ENCODE measurements at regions of chr16 and their contacts with region 1.

Region 1: DNA sequence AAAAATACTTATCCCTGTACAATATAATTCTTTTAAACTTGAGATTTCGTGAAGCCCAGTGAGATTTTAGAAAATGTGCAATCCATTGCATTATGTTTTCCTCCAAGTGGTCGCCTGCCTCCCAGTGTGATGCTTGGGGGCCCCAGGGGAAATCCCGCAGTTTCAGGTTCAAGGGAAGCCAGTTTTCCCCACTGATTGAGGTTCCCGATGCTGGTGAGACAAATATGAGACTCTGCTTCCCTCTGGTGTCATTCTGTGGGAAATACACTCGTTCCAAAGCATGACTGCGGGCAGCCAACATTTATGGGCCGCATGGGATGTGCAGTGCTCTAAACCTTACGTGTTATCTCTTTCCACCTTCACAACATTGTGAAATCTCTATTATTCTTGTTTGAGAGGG is 200.8 kb downstream of the PRKCB start:
- DNase-seq: peak; percentile 33
- H3K4me3 ChIP-seq: no peak overlapping the region
- H3K27ac ChIP-seq: no peak overlapping the region
- H3K4me1 ChIP-seq: no peaks in the 10 kb centered on the region
- H3K27me3 ChIP-seq: no peaks in the 10 kb centered on the region
- CTCF ChIP-seq: peak; percentile 77 to 82

Region 2: DNA sequence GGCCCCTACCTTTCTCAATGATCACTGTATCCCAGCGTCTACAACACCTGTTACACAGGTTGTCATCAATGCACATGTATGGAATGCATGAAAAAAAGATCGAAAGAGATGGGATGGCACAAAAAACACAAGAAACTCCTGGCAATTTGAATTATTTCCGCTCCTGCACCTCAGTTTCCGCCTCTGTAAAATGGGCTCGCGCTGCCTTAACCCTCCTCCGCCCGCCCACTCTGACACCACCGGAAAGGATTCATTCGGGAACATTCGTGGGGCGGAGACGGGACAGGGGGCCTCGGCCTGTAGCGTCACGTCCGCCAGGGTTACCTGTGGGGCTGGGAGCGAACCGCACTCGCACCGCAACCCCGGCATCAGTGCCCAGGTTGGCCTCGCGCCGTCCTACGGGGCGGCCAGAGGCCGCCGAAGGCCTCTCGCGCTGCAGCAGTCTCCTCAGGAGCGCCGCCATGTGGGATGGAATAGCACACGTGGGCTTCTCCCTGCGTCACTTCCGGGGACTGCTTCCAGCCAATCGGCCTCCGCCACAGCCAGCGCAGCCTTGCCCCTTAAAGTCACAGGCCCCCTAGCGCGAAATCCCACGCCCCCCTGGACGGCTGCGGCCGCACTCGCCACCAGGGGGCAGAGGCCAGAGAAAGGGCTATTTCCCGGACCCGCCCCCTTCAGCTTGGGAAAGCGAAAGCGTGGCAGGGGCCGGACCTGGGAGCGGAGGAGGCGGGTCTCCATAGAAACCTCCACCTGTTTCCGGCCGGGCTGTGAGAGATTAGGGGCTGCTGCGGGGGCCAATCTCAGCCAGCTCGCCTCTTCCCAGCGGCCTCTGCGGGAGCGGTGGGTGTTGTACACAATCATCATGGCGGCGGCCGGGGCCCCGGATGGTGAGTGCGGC is 479.5 kb before region 1 on chr16 and contains the starts of genes EARS2 and UBFD1:
- CTCF ChIA-PET with region 1: no interaction called
- dilution Hi-C with region 1: no loop called
- in situ Hi-C with region 1: no loop called
- intact Hi-C with region 1: loop called (anchors 1 kb)
- DNase-seq: peak; percentile 99
- H3K4me3 ChIP-seq: peak within 1 kb of the TSS; percentile 92 to 96 (median 95)
- H3K27ac ChIP-seq: peak within 1 kb of the TSS; percentile 91
- H3K4me1 ChIP-seq: peaks cover 11% of the 10 kb centered on the region
- H3K27me3 ChIP-seq: no peaks in the 10 kb centered on the region
- CTCF ChIP-seq: peak; percentile 75 to 96
- total RNA-seq, gene EARS2: 30.1 to 47.7 TPM
- total RNA-seq, gene UBFD1: 57.3 to 79.7 TPM

Region 3: GRCh38 chr16:23729503-23730424 is 306.9 kb before region 1 on chr16:
- CTCF ChIA-PET with region 1: no interaction called
- dilution Hi-C with region 1: no loop called
- in situ Hi-C with region 1: loop called in 1 of 2 experiments (anchors 10 kb)
- intact Hi-C with region 1: no loop called
- DNase-seq: peak; percentile 15
- H3K4me3 ChIP-seq: no peak overlapping the region
- H3K27ac ChIP-seq: no peak overlapping the region
- H3K4me1 ChIP-seq: no peaks in the 10 kb centered on the region
- H3K27me3 ChIP-seq: no peaks in the 10 kb centered on the region
- CTCF ChIP-seq: no peak

Region 4: DNA sequence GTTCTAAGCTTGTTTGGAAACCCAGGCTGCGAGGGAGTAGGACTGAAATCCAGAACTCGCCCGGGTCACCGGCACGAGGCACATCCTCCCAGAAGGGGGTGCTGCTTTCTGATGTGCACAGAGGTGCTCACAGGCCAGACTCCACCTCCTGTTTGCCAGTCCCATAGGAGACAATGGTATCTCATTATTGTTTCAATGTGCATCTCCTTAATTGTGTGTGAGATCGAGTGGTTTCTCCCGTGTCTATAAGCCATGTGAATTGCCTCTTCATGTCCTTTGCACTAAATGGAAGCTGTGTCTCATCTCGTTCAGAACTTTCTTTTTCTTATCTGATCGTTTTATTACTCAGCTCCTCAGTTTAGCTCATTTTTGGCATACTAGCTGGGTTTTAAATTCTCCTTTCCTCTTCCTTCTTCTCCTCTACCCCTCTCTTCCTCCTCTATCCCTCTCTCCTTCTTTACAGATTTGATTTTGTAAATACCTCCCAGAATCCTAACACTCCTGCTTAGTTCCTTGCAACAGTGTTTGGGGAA is 233.0 kb before region 1 on chr16:
- CTCF ChIA-PET with region 1: interaction called, 8 read pairs
- dilution Hi-C with region 1: no loop called
- in situ Hi-C with region 1: no loop called
- intact Hi-C with region 1: loop called (anchors 1 kb)
- DNase-seq: peak; percentile 38
- H3K4me3 ChIP-seq: no peak overlapping the region
- H3K27ac ChIP-seq: no peak overlapping the region
- H3K4me1 ChIP-seq: no peaks in the 10 kb centered on the region
- H3K27me3 ChIP-seq: no peaks in the 10 kb centered on the region
- CTCF ChIP-seq: peak; percentile 70 to 85

Region 5: GRCh38 chr16:23877107-23878090 is 159.2 kb before region 1 on chr16:
- CTCF ChIA-PET with region 1: no interaction called
- dilution Hi-C with region 1: no loop called
- in situ Hi-C with region 1: no loop called
- intact Hi-C with region 1: loop called (anchors 1 kb)
- DNase-seq: no peak
- H3K4me3 ChIP-seq: no peak overlapping the region
- H3K27ac ChIP-seq: no peak overlapping the region
- H3K4me1 ChIP-seq: no peaks in the 10 kb centered on the region
- H3K27me3 ChIP-seq: no peaks in the 10 kb centered on the region
- CTCF ChIP-seq: peak in 1 of 2 donors; percentile 10

Region 6: GRCh38 chr16:24010440-24011089 is 26.0 kb before region 1 on chr16:
- CTCF ChIA-PET with region 1: no interaction called
- dilution Hi-C with region 1: no loop called
- in situ Hi-C with region 1: no loop called
- intact Hi-C with region 1: loop called (anchors 2 kb)
- DNase-seq: peak; percentile 66
- H3K4me3 ChIP-seq: no peak overlapping the region
- H3K27ac ChIP-seq: no peak overlapping the region
- H3K4me1 ChIP-seq: no peaks in the 10 kb centered on the region
- H3K27me3 ChIP-seq: peaks cover 2% of the 10 kb centered on the region
- CTCF ChIP-seq: peak; percentile 76 to 85

Region 7: GRCh38 chr16:24348901-24349662 is 312.5 kb after region 1 on chr16:
- CTCF ChIA-PET with region 1: no interaction called
- dilution Hi-C with region 1: no loop called
- in situ Hi-C with region 1: no loop called
- intact Hi-C with region 1: no loop called
- DNase-seq: no peak
- H3K4me3 ChIP-seq: no peak overlapping the region
- H3K27ac ChIP-seq: no peak overlapping the region
- H3K4me1 ChIP-seq: no peaks in the 10 kb centered on the region
- H3K27me3 ChIP-seq: no peaks in the 10 kb centered on the region
- CTCF ChIP-seq: no peak

Region 8: DNA sequence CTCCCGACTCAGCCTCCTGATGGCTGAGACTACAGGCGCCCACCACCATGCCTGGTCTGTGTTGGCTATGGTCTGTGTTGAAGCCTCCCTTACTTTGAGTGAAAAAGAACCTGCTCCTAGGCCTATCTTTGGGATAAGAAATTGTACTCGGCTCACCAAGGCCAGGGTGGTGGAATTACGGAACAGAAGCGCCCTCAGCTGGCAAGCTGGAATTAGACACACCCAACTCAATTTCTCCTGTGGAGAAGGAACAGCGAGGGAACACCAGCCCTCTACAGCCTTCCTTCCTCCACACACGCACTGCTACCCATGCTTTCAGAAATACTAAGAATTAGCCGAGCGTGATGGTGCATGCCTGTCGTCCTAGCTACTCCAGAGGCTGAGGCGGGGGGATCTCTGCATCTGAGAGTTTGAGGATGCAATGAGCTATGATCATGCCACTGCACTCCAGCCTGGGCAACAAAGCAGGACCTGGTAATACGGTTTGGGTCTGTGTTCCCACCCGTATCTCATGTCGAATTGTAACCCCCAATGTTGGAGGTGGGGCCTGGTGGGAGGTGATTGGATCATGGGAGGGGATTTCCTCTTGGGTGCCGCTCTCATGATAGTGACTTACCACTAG is 462.7 kb after region 1 on chr16:
- CTCF ChIA-PET with region 1: no interaction called
- dilution Hi-C with region 1: no loop called
- in situ Hi-C with region 1: loop called in 1 of 2 experiments (anchors 5 kb)
- intact Hi-C with region 1: no loop called
- DNase-seq: peak; percentile 39
- H3K4me3 ChIP-seq: no peak overlapping the region
- H3K27ac ChIP-seq: no peak overlapping the region
- H3K4me1 ChIP-seq: no peaks in the 10 kb centered on the region
- H3K27me3 ChIP-seq: peaks cover 2% of the 10 kb centered on the region
- CTCF ChIP-seq: peak; percentile 37 to 54